ENCODE measurements at regions of chr4 and their contacts with region 1.

Region 1: GRCh38 chr4:8061145-8061544 is 97.5 kb downstream of the ABLIM2 start:
- DNase-seq: no peak
- H3K4me3 ChIP-seq: no peak overlapping the region
- H3K27ac ChIP-seq: no peak overlapping the region
- H3K4me1 ChIP-seq: no peaks in the 10 kb centered on the region
- H3K27me3 ChIP-seq: no peaks in the 10 kb centered on the region
- CTCF ChIP-seq: no peak

Region 2: DNA sequence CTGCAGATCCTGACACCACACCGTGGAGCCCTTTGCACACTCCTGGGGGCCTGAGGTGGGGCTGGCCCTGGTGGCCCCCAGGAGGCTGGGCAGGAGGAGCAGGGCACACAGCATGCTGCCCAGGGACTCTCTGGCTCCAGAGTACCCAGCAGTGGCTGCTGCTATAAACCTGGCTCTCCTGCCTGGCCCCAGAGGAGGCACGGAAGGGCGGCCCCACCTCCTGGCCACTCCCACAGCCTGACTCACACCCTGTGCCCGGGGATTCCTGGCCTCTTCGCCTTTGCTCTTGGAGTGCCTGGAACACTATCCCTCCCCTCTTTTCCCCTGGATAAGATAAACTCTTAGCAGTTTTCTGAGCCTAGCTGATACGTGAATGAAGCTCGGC is 626.4 kb before region 1 on chr4 and contains the start of gene PSAPL1:
- CTCF ChIA-PET with region 1: no interaction called
- dilution Hi-C with region 1: no loop called
- in situ Hi-C with region 1: no loop called
- intact Hi-C with region 1: no loop called
- DNase-seq: peak; percentile 60
- H3K4me3 ChIP-seq: no peak within 1 kb of the TSS
- H3K27ac ChIP-seq: no peak within 1 kb of the TSS
- H3K4me1 ChIP-seq: peaks cover 24% of the 10 kb centered on the region
- H3K27me3 ChIP-seq: no peaks in the 10 kb centered on the region
- CTCF ChIP-seq: no peak
- total RNA-seq, gene PSAPL1: under 0.01 TPM in 1 of 2 donors, not detected in the other

Region 3: GRCh38 chr4:8128100-8128856 is 67.1 kb after region 1 on chr4:
- CTCF ChIA-PET with region 1: no interaction called
- dilution Hi-C with region 1: loop called (anchors 5 kb)
- in situ Hi-C with region 1: no loop called
- intact Hi-C with region 1: no loop called
- DNase-seq: no peak
- H3K4me3 ChIP-seq: no peak overlapping the region
- H3K27ac ChIP-seq: no peak overlapping the region
- H3K4me1 ChIP-seq: no peaks in the 10 kb centered on the region
- H3K27me3 ChIP-seq: peaks cover 1% of the 10 kb centered on the region
- CTCF ChIP-seq: no peak